ENCODE measurements at regions of chr17 and their contacts with region 1.

Region 1: GRCh38 chr17:38868817-38869525 is 887 bp upstream of the LASP1 start:
- DNase-seq: peak; percentile 78
- H3K4me3 Mint-ChIP-seq: peak overlapping the region; percentile 91
- H3K27ac Mint-ChIP-seq: peak overlapping the region; percentile 96
- H3K4me1 Mint-ChIP-seq: peaks cover 52% of the 10 kb centered on the region
- H3K27me3 Mint-ChIP-seq: no peaks in the 10 kb centered on the region

Region 2: DNA sequence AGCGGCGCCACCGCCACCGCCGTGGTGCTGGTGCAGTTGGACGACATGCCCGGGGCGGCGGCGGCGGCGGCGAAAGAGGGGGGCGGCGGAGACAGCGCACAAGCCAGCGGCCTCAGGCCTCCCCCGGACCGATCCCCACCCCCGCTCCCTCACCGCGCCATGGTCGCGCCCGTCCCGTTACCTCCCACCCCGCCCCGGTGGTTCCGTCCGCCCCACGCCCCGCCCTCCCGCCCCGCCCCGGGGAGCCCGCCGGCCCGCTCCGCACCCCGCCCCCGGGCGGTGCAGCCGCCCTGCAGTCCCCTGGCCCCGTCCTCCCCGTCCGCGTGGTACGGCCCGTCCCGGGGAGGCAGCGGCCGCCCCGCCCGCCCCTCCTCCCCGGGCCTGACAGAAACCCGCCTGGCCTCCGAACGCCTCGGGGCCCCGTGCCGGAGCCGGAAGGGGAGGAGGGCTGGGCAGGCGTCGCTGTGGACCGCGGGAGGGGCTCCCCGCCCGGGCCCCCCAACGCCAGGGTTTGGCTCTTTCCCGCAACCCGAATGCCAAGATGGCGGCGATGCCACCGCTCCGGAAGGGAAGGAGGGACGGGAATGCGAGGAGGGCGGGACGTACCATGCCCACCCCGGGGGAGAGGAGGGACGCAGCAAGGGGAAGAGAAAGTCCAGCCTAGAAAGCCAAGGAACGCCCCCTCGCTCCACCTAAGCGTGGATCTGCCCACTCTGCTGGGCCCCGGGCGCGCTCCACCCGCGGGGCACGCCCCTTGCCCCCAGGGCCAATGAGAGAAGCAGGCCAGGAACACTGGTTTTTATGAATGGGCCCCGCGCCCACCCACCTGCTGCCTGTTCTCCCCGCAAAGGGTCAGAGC is 69.4 kb before region 1 on chr17 and contains the start of gene PIP4K2B:
- intact Hi-C with region 1: loop called (anchors 5 kb)
- DNase-seq: peak; percentile 85
- H3K4me3 Mint-ChIP-seq: peak within 1 kb of the TSS; percentile 93
- H3K27ac Mint-ChIP-seq: peak within 1 kb of the TSS; percentile 93
- H3K4me1 Mint-ChIP-seq: peaks cover 33% of the 10 kb centered on the region
- H3K27me3 Mint-ChIP-seq: no peaks in the 10 kb centered on the region
- total RNA-seq, gene PIP4K2B: 40.6 and 40.8 TPM in 2 replicates

Region 3: DNA sequence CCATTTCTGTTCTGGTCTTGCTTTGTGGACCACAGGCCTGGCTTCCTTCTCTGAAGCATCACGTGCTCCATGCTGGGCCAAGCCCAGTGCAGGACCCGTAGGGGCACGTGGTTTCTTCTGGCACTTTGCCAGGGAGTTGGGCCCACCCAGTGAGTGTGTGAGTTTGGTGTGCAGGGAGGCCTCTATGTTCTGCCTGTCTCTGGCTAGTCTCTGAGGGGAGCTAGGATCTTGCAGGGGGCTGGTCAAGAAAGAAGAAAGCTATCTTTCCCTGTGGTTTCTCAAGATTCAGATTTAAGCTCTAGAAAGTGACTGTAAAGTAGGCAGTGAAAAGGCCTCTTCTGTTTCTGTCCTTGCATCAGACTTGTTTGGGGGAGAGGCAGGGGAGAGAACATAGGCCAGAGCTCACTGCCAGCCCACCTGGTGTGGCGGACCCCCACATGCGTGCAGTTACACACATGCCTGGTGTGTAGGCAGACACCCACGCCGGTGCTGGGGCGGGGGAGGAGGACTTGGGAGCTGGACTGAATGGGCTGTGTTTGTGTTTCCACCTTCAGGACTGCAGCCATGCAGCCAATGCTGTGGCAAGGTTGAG is 12.7 kb after region 1 on chr17:
- intact Hi-C with region 1: loop called (anchors 1 kb)
- DNase-seq: no peak
- H3K4me3 Mint-ChIP-seq: peak overlapping the region; percentile 53
- H3K27ac Mint-ChIP-seq: peak overlapping the region; percentile 89
- H3K4me1 Mint-ChIP-seq: peaks cover 82% of the 10 kb centered on the region
- H3K27me3 Mint-ChIP-seq: no peaks in the 10 kb centered on the region

Region 4: GRCh38 chr17:38925263-38925995 is 56.5 kb after region 1 on chr17 and contains the start of gene LASP1NB:
- intact Hi-C with region 1: loop called (anchors 2 kb)
- DNase-seq: no peak
- H3K4me3 Mint-ChIP-seq: peak within 1 kb of the TSS; percentile 24
- H3K27ac Mint-ChIP-seq: peak within 1 kb of the TSS; percentile 21
- H3K4me1 Mint-ChIP-seq: peaks cover 24% of the 10 kb centered on the region
- H3K27me3 Mint-ChIP-seq: no peaks in the 10 kb centered on the region

Region 5: GRCh38 chr17:38967290-38967738 is 98.3 kb after region 1 on chr17 and contains the start of gene FBXO47:
- intact Hi-C with region 1: loop called (anchors 5 kb)
- DNase-seq: peak; percentile 72
- H3K4me3 Mint-ChIP-seq: peak within 1 kb of the TSS; percentile 78
- H3K27ac Mint-ChIP-seq: peak within 1 kb of the TSS; percentile 65
- H3K4me1 Mint-ChIP-seq: peaks cover 11% of the 10 kb centered on the region
- H3K27me3 Mint-ChIP-seq: peaks cover 11% of the 10 kb centered on the region
- total RNA-seq, gene FBXO47: 0.08 TPM in 1 of 2 replicates, not detected in the other

Measured in activated T-helper 1 cell treated with anti-CD3 and anti-CD28 coated beads, Interleukin-12 subunit alpha, Interleukin-12 subunit beta, Interleukin-2, Interleukin-4 antibody, amounts not matched to agents 30 ng/mL and 10 ng/mL and 1 ng/mL, durations not matched to agents 14 hours and 24 hours and 36 hours (primary cell).